Activated CD4-positive, alpha-beta memory T cell treated with anti-CD3 and anti-CD28 coated beads for 36 hours (primary cell): ENCODE measurements at regions of chr4 and their contacts with region 1.

Region 1: GRCh38 chr4:158496030-158496741 is 25.5 kb upstream of the RXFP1 start:
- DNase-seq: peak; percentile 51
- H3K4me3 Mint-ChIP-seq: no peak overlapping the region
- H3K27ac Mint-ChIP-seq: no peak overlapping the region
- H3K4me1 Mint-ChIP-seq: no peaks in the 10 kb centered on the region
- H3K27me3 Mint-ChIP-seq: peaks cover 2% of the 10 kb centered on the region

Region 2: DNA sequence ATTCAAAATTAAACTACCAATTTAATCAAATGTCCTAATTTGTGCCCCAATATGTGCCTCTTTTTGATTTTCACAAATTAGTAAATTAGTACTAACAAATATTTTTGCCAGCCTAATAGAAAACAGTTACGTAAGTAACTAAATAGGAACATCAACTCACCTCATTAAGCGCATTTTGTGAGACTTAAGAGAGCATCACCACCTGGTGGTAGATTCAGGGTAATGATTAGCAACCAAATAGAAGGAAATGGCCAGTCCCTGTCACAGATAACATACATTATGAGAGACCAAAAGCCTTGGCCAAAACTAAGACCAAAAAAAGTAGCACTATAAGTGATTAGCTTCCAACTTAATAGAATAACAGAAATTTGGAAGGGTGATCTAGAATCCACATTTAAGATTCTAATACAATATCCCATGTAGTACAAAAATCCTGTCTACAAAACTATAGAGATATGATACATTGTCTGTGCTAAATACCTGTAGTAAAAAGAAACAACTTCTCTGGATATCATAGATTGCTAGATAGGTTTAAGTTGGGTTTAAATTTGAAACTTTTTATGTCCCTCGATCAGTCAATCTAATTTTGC is 128.8 kb after region 1 on chr4:
- CTCF ChIA-PET with region 1: interaction called, 4 read pairs
- POLR2A ChIA-PET with region 1: no interaction called
- intact Hi-C with region 1: loop called (anchors 2 kb)
- DNase-seq: no peak
- H3K4me3 Mint-ChIP-seq: no peak overlapping the region
- H3K27ac Mint-ChIP-seq: no peak overlapping the region
- H3K4me1 Mint-ChIP-seq: no peaks in the 10 kb centered on the region
- H3K27me3 Mint-ChIP-seq: peaks cover 11% of the 10 kb centered on the region

Region 3: GRCh38 chr4:159201168-159201567 is 705.0 kb after region 1 on chr4:
- CTCF ChIA-PET with region 1: no interaction called
- POLR2A ChIA-PET with region 1: no interaction called
- intact Hi-C with region 1: loop called (anchors 5 kb)
- DNase-seq: no peak
- H3K4me3 Mint-ChIP-seq: no peak overlapping the region
- H3K27ac Mint-ChIP-seq: no peak overlapping the region
- H3K4me1 Mint-ChIP-seq: peaks cover 32% of the 10 kb centered on the region
- H3K27me3 Mint-ChIP-seq: no peaks in the 10 kb centered on the region